ENCODE measurements at regions of chr17 and their contacts with region 1.

Region 1: GRCh38 chr17:7572588-7573323 is 6.7 kb upstream of the CD68 start:
- DNase-seq: peak in 8 of 9 experiments; percentile 99 to 100 (median 100)
- ATAC-seq: peak; percentile 83
- H3K4me3 ChIP-seq: peak overlapping the region; percentile 97 to 100
- H3K4me3 Mint-ChIP-seq: peak overlapping the region; percentile 99
- H3K27ac ChIP-seq: peak overlapping the region; percentile 98 to 99
- H3K27ac Mint-ChIP-seq: peak overlapping the region; percentile 96
- H3K4me1 ChIP-seq: peaks cover 28% of the 10 kb centered on the region
- H3K4me1 Mint-ChIP-seq: peaks cover 48% of the 10 kb centered on the region
- H3K27me3 ChIP-seq: no peaks in the 10 kb centered on the region
- H3K27me3 Mint-ChIP-seq: no peaks in the 10 kb centered on the region
- CTCF ChIP-seq: no peak

Region 2: DNA sequence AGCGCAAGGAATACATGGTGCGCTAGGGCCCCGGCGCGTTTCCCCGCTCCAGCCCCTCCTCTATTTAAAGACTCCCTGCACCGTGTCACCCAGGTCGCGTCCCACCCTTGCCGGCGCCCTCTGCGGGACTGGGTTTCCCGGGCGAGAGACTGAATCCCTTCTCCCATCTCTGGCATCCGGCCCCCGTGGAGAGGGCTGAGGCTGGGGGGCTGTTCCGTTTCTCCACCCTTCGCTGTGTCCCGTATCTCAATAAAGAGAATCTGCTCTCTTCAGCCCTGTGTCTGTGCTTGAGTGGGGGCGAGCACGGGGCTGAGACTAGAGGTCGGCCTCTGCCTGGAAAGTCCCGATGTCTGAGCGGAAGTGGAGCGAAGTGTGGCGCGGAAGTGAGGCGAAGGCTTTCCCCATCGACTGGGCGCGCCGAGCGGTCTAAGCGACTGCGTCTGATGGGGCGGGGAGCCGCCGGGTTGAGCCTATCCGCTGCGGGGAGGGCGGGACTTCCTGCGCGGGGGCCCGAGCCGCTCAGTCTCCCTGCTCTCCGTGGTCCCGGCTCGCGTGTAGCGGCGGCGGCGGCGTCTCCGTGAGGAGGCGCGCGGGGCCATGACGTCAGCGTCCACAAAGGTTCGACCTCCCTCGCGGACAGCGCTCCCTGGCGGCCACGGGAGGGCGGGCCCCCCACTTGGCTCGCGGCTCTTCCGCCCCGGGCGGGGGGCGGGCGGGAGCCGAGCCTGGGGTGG is 558.3 kb before region 1 on chr17:
- CTCF ChIA-PET with region 1: no interaction called
- POLR2A ChIA-PET with region 1: no interaction called
- intact Hi-C with region 1: loop called (anchors 2 to 5 kb)
- DNase-seq: peak; percentile 94 to 100 (median 97)
- ATAC-seq: peak; percentile 79
- H3K4me3 ChIP-seq: peak overlapping the region; percentile 69 to 70
- H3K4me3 Mint-ChIP-seq: peak overlapping the region; percentile 98
- H3K27ac ChIP-seq: peak overlapping the region; percentile 95 to 99
- H3K27ac Mint-ChIP-seq: peak overlapping the region; percentile 100
- H3K4me1 ChIP-seq: peaks cover 63% of the 10 kb centered on the region
- H3K4me1 Mint-ChIP-seq: peaks cover 78% of the 10 kb centered on the region
- H3K27me3 ChIP-seq: no peaks in the 10 kb centered on the region
- H3K27me3 Mint-ChIP-seq: no peaks in the 10 kb centered on the region
- CTCF ChIP-seq: peak; percentile 61

Region 3: GRCh38 chr17:7239091-7240027 is 333.4 kb before region 1 on chr17 and contains the start of gene PHF23:
- CTCF ChIA-PET with region 1: no interaction called
- POLR2A ChIA-PET with region 1: interaction called, 3 read pairs
- intact Hi-C with region 1: loop called (anchors 1 kb)
- DNase-seq: peak; percentile 93 to 99 (median 97)
- ATAC-seq: peak; percentile 64
- H3K4me3 ChIP-seq: peak within 1 kb of the TSS; percentile 87 to 90
- H3K4me3 Mint-ChIP-seq: peak within 1 kb of the TSS; percentile 98
- H3K27ac ChIP-seq: peak within 1 kb of the TSS; percentile 64 to 100
- H3K27ac Mint-ChIP-seq: peak within 1 kb of the TSS; percentile 90
- H3K4me1 ChIP-seq: peaks cover 37% of the 10 kb centered on the region
- H3K4me1 Mint-ChIP-seq: peaks cover 58% of the 10 kb centered on the region
- H3K27me3 ChIP-seq: no peaks in the 10 kb centered on the region
- H3K27me3 Mint-ChIP-seq: no peaks in the 10 kb centered on the region
- CTCF ChIP-seq: no peak
- total RNA-seq, gene PHF23: 2.8 to 3.1 TPM

Region 4: GRCh38 chr17:7403977-7404736 is 168.6 kb before region 1 on chr17 and contains the start of gene TMEM256:
- CTCF ChIA-PET with region 1: no interaction called
- POLR2A ChIA-PET with region 1: interaction called, 4 read pairs
- intact Hi-C with region 1: loop called (anchors 1 to 5 kb)
- DNase-seq: peak; percentile 90 to 99 (median 94)
- ATAC-seq: peak; percentile 83
- H3K4me3 ChIP-seq: peak within 1 kb of the TSS; percentile 75 to 83
- H3K4me3 Mint-ChIP-seq: peak within 1 kb of the TSS; percentile 95
- H3K27ac ChIP-seq: peak within 1 kb of the TSS; percentile 61 to 81
- H3K27ac Mint-ChIP-seq: peak within 1 kb of the TSS; percentile 96
- H3K4me1 ChIP-seq: peaks cover 24% of the 10 kb centered on the region
- H3K4me1 Mint-ChIP-seq: peaks cover 31% of the 10 kb centered on the region
- H3K27me3 ChIP-seq: no peaks in the 10 kb centered on the region
- H3K27me3 Mint-ChIP-seq: no peaks in the 10 kb centered on the region
- CTCF ChIP-seq: no peak
- total RNA-seq, gene TMEM256: 27.1 to 29.1 TPM

Region 5: GRCh38 chr17:7583253-7584109 is 10.7 kb after region 1 on chr17 and contains the start of gene MPDU1:
- CTCF ChIA-PET with region 1: interaction called, 9 read pairs
- POLR2A ChIA-PET with region 1: interaction called, 66 read pairs
- intact Hi-C with region 1: loop called (anchors 1 kb)
- DNase-seq: peak; percentile 85 to 98 (median 94)
- ATAC-seq: peak; percentile 83
- H3K4me3 ChIP-seq: peak within 1 kb of the TSS; percentile 90 to 93
- H3K4me3 Mint-ChIP-seq: peak within 1 kb of the TSS; percentile 100
- H3K27ac ChIP-seq: peak within 1 kb of the TSS; percentile 92 to 99
- H3K27ac Mint-ChIP-seq: peak within 1 kb of the TSS; percentile 100
- H3K4me1 ChIP-seq: peaks cover 40% of the 10 kb centered on the region
- H3K4me1 Mint-ChIP-seq: peaks cover 47% of the 10 kb centered on the region
- H3K27me3 ChIP-seq: no peaks in the 10 kb centered on the region
- H3K27me3 Mint-ChIP-seq: no peaks in the 10 kb centered on the region
- CTCF ChIP-seq: no peak
- total RNA-seq, gene MPDU1: 16.6 to 17.2 TPM

Region 6: DNA sequence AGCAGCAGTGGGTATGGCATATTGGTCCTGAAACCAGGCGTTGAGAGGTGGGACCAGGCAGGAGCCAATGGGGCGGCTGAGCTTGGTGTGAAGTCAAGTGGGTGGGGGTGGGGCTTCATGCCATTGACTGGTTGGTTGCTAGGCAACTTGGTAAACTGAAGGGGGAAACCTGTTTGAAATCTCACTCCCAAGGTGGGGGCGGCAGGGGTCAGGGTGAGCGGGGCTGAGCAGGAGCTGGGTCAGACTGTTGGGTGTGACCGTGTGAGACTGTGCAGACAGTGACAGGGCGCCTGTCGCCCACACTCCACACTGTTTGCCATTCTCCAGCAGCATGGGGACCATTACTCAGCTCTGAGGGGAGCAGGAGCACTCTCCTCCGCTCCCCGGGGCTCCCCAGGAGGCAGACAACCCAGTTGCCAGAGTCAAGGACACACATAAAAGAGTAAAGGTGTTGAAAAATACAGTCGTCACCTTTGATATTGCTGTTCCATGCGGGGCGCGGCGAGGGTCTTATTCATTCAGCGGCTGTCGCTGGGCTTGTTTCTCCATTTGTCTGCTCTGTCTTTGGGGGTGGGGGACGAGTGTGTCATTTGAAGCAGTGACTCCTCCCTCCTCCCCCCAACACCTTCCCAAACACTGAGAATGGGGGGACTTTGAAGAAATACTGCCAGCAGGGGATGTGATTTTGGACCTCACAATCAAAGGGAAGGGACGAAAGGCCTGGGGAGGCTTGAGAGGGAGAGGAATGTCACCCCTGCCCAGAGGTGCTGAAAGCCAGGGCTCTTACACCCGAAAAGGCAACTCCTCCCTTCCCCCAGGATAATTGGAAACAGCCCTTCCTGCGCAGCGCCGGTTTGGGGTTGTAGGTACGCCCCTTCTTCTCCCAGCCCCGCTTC is 131.1 kb after region 1 on chr17:
- CTCF ChIA-PET with region 1: no interaction called
- POLR2A ChIA-PET with region 1: no interaction called
- intact Hi-C with region 1: no loop called
- DNase-seq: peak in 4 of 9 experiments; percentile 16 to 63 (median 47)
- ATAC-seq: peak; percentile 22
- H3K4me3 ChIP-seq: no peak overlapping the region
- H3K4me3 Mint-ChIP-seq: peak overlapping the region; percentile 71
- H3K27ac ChIP-seq: no peak overlapping the region
- H3K27ac Mint-ChIP-seq: no peak overlapping the region
- H3K4me1 ChIP-seq: peaks cover 16% of the 10 kb centered on the region
- H3K4me1 Mint-ChIP-seq: peaks cover 19% of the 10 kb centered on the region
- H3K27me3 ChIP-seq: peaks cover 12 to 23% of the 10 kb centered on the region in 2 experiments
- H3K27me3 Mint-ChIP-seq: peaks cover 50% of the 10 kb centered on the region
- CTCF ChIP-seq: no peak

Region 7: DNA sequence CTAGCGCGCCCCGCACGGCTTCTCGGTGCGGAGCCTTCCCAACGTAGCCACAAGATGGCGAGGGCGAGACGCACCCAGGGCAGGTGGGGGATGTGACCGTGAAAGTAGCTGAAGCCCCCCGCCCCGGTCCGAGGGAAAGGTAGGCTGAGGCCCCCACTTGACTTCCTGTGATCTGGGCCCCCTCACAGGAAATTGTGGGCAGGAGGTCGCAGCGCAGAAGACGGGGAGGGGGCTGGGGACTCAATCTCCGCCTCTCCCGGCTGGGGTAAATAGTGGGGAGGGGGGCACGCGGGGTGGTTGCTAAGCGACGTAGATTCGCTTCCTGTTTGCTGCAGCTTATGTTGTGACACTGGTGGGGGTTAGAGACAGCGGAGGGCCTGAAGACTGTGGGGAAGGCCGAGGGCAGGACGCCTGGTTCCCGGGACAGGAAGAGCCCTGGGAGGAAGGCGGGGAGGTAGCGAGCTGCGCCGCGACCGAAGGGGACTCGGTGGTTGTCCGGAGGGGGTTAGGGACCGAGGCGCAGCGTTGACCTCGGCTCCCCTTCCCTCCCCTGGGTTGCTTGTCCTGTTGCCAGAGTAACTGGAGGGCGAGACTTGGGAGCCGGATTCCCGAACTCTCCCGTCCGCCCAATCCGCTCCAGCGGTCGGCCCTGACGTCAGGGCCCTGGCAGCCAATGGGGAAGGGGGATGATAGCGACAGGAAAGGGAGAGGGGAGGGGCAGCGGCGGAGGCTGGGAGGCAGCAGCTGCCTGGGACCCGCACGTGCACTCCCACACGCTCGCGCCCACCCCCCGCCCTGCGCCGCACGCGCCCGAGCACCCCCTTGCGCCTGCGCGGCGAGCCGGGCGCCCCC is 262.4 kb after region 1 on chr17:
- CTCF ChIA-PET with region 1: no interaction called
- POLR2A ChIA-PET with region 1: no interaction called
- intact Hi-C with region 1: loop called (anchors 2 kb)
- DNase-seq: peak; percentile 75 to 98 (median 85)
- ATAC-seq: peak; percentile 54
- H3K4me3 ChIP-seq: peak overlapping the region; percentile 90 to 97
- H3K4me3 Mint-ChIP-seq: peak overlapping the region; percentile 96
- H3K27ac ChIP-seq: peak overlapping the region; percentile 99
- H3K27ac Mint-ChIP-seq: peak overlapping the region; percentile 99
- H3K4me1 ChIP-seq: peaks cover 45% of the 10 kb centered on the region
- H3K4me1 Mint-ChIP-seq: peaks cover 45% of the 10 kb centered on the region
- H3K27me3 ChIP-seq: no peaks in the 10 kb centered on the region
- H3K27me3 Mint-ChIP-seq: no peaks in the 10 kb centered on the region
- CTCF ChIP-seq: peak; percentile 69

Measured in CD8-positive, alpha-beta T cell (primary cell).